ENCODE measurements at regions of chr2 and their contacts with region 1.

Region 1: GRCh38 chr2:174465327-174465726 is 21.5 kb downstream of the GPR155 start:
- H3K4me3 ChIP-seq: no peak overlapping the region
- H3K27ac ChIP-seq: no peak overlapping the region
- H3K4me1 ChIP-seq: no peaks in the 10 kb centered on the region
- CTCF ChIP-seq: no peak

Region 2: DNA sequence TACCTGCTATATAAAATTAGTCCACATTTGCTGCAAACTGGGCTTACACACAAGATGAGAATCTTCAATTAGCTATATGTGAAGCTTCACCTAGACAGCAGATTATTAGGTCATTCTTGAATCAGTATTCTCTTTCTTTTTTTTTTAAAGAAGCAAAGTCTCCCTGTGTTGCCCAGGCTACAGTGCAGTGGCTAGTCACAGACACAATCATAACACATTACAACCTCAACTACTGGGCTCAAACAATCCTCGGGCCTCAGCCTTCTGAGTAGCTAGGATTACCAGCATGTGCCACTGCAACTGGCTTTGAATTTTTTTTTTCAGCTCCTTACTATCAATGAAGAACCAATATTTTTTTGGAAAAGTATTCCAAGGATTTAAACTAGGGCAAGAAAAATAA is 247.5 kb before region 1 on chr2:
- CTCF ChIA-PET with region 1: no interaction called
- POLR2A ChIA-PET with region 1: no interaction called
- H3K4me3 ChIP-seq: no peak overlapping the region
- H3K27ac ChIP-seq: no peak overlapping the region
- H3K4me1 ChIP-seq: no peaks in the 10 kb centered on the region
- CTCF ChIP-seq: no peak

Region 3: GRCh38 chr2:174477759-174478158 is 12.4 kb after region 1 on chr2:
- CTCF ChIA-PET with region 1: interaction called, 13 read pairs
- POLR2A ChIA-PET with region 1: no interaction called
- H3K4me3 ChIP-seq: no peak overlapping the region
- H3K27ac ChIP-seq: no peak overlapping the region
- H3K4me1 ChIP-seq: no peaks in the 10 kb centered on the region
- CTCF ChIP-seq: no peak

Region 4: DNA sequence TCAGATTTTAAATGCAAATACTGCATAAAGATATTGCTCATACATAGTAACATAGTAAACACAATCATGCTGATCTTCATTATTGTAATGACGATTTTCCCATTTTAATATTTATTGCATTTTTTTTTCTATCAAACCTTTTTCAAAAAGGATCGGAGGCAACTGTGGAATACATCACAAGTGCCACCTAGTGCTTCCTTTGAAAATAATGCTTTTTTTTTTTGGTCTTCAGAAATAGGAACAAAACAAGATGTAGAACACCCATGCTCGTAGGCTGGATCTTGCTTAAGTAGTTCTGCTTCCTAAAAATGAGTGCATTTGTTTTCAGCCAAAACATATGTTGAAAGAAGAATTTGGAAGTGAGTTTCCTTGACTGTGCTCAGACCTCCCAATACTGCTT is 57.2 kb after region 1 on chr2:
- CTCF ChIA-PET with region 1: interaction called, 15 read pairs
- POLR2A ChIA-PET with region 1: interaction called, 3 read pairs
- H3K4me3 ChIP-seq: no peak overlapping the region
- H3K27ac ChIP-seq: no peak overlapping the region
- H3K4me1 ChIP-seq: no peaks in the 10 kb centered on the region
- CTCF ChIP-seq: no peak

Region 5: GRCh38 chr2:174546581-174547506 is 81.5 kb after region 1 on chr2:
- CTCF ChIA-PET with region 1: interaction called, 73 read pairs
- POLR2A ChIA-PET with region 1: no interaction called
- H3K4me3 ChIP-seq: no peak overlapping the region
- H3K27ac ChIP-seq: no peak overlapping the region
- H3K4me1 ChIP-seq: no peaks in the 10 kb centered on the region
- CTCF ChIP-seq: peak; percentile 56

Region 6: GRCh38 chr2:174577967-174578589 is 112.8 kb after region 1 on chr2:
- CTCF ChIA-PET with region 1: interaction called, 14 read pairs
- POLR2A ChIA-PET with region 1: no interaction called
- H3K4me3 ChIP-seq: no peak overlapping the region
- H3K27ac ChIP-seq: no peak overlapping the region
- H3K4me1 ChIP-seq: no peaks in the 10 kb centered on the region
- CTCF ChIP-seq: no peak; the same call in 1 of the 2 replicates

Region 7: GRCh38 chr2:174603280-174603679 is 138.0 kb after region 1 on chr2:
- CTCF ChIA-PET with region 1: interaction called, 17 read pairs
- POLR2A ChIA-PET with region 1: no interaction called
- H3K4me3 ChIP-seq: no peak overlapping the region
- H3K27ac ChIP-seq: no peak overlapping the region
- H3K4me1 ChIP-seq: 0 out of 2 replicates have a peak, but pooled peaks cover 3% of the 10 kb centered on the region
- CTCF ChIP-seq: no peak; the same call in 1 of the 2 replicates

Region 8: DNA sequence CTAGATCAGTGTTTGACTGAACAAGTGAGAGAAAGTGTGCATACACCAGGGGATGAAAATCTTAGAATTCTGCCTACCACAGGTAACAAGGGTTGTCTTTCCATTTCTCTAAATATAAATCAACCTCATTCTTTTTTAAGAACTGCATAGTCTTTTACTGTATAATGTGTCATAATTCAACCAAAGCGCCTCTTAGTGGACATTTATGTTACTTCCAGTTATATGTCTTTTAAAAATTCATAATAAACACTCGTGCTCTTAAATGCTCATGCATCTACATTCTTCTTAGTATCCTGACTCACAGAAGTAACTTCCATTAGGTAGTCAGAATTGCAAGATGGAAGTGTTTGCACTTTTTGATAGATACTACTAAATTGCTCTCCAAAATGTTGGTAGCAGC is 222.8 kb after region 1 on chr2:
- CTCF ChIA-PET with region 1: interaction called, 42 read pairs
- POLR2A ChIA-PET with region 1: interaction called, 4 read pairs
- H3K4me3 ChIP-seq: no peak overlapping the region
- H3K27ac ChIP-seq: no peak overlapping the region
- H3K4me1 ChIP-seq: no peaks in the 10 kb centered on the region
- CTCF ChIP-seq: no peak

Region 9: DNA sequence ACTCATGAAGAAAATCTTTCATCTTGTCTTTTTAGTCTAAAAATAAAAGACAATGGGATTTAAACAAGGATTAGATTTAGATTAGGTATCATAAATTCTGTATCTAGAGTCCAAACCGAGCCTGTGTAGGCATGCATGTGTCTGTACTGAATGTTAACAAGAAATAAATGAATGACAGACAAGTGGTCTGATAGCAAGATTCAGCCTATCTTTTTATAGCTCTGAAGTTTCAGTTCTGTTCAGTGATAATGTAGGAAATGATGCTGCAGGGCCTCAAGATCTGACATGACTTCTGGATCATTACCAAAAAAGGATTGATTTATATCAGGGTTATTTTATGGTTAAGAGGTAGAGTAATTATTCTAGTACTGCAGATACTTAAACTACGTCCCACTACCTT is 853.2 kb after region 1 on chr2:
- CTCF ChIA-PET with region 1: no interaction called
- POLR2A ChIA-PET with region 1: no interaction called
- H3K4me3 ChIP-seq: no peak overlapping the region
- H3K27ac ChIP-seq: no peak overlapping the region
- H3K4me1 ChIP-seq: no peaks in the 10 kb centered on the region
- CTCF ChIP-seq: no peak

Measured in HEK293 (cell line).